ENCODE measurements at regions of chr12 and their contacts with region 1.

Region 1: DNA sequence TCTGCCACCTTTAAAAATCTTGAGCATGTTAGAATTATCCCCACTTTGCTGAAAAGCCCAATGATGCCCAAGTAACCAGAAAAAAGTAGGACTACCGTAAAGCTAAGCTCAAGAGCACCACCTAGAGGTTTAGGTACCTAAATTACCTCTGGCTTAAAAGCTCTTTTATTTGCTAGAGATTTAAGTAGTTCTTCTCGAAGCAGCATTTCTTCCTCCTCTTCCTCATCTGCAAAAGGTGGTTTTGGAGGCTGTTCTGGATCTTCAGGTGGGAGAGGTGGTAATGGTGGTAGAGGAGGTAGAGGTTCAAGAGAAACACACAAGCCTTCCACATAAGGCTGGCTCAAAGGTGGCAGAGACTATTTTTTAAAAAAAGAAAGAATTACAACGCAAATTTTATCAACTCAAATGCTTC is 26.9 kb downstream of the ZFC3H1 start:
- DNase-seq: peak; percentile 66
- H3K4me3 ChIP-seq: no peak overlapping the region
- H3K27ac ChIP-seq: no peak overlapping the region
- H3K4me1 ChIP-seq: no peaks in the 10 kb centered on the region
- H3K27me3 ChIP-seq: no peaks in the 10 kb centered on the region
- CTCF ChIP-seq: peak; percentile 53 to 66
- POLR2A ChIP-seq: no peak

Region 2: DNA sequence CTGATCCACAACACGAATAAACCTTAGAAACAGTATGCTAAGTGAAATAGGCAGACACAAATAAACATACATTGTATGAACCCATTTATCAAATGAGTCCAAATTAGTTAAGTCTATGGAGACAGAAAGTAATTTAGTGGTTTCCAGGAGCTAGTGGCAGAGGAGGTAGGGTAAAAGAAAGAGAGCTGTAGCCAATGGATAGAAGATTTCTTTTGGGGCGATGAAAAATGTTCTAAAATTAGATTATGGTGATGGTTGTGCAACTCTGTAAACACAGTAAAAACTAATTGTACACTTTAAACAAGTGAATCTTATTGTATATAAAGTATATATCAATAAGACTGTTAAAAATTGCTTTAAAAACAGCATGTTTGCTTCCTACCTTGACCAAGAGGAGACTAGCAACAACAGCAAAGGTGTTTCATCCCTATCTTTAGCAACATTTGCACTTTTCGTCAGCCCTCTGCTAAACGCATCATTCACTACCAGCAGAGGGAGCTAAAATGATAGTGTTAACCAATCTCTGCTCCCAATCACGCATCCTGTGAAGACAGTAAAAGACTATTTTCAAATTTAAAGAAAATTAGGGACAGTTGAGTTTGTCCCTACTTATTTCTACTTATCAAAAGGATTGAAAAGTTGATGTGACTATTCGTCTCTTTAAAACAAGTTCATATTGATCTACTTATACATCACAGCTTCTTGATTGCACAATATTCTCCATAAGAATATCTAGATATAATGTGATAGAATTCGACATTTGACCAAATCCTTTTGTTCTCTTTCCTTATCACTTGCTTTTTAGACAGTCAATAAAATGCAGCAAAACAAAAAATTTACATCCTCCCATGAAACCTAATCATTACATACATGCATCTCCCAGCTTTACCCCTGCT is 221.1 kb before region 1 on chr12:
- CTCF ChIA-PET with region 1: interaction called, 14 read pairs
- POLR2A ChIA-PET with region 1: no interaction called
- dilution Hi-C with region 1: no loop called
- intact Hi-C with region 1: loop called (anchors 1 kb)
- DNase-seq: peak; percentile 49
- H3K4me3 ChIP-seq: no peak overlapping the region
- H3K27ac ChIP-seq: no peak overlapping the region
- H3K4me1 ChIP-seq: no peaks in the 10 kb centered on the region
- H3K27me3 ChIP-seq: no peaks in the 10 kb centered on the region
- CTCF ChIP-seq: peak; percentile 55 to 67
- POLR2A ChIP-seq: no peak

Region 3: DNA sequence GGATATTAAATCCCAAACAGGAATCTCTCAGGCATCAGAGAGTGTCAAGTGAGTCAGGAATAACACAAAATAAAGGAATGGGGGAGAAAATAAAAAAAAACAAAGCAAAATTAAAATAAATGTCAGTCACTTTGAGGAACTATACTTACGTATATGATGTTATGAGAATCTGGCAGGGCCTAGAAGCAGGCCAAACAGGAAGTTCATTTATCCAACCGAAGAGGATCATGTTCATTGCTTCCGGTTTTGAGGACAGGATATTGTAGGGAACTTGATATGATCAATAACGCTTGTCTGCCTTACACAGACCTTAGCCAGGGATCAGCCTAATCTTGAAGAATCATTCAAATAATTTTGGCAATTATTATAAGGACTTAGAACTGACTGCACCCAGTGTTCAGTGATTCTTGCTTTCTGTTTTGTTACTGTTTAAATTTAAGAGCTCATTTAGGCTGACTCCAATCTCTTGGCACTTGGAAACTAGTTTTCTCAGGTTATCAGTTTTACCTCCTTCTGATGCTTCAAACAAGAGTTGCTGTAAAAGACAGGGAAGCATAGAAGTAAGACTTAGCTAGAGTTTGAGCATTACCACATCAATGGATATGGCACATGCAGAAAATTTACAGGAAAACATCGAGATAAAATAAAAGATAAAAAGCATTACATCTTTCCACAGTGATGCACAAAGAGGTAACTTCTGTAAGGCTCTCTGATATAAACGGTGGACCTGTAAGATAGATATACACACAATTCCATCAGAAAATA is 26.5 kb before region 1 on chr12:
- CTCF ChIA-PET with region 1: interaction called, 21 read pairs
- POLR2A ChIA-PET with region 1: no interaction called
- dilution Hi-C with region 1: no loop called
- intact Hi-C with region 1: no loop called
- DNase-seq: no peak
- H3K4me3 ChIP-seq: no peak overlapping the region
- H3K27ac ChIP-seq: no peak overlapping the region
- H3K4me1 ChIP-seq: no peaks in the 10 kb centered on the region
- H3K27me3 ChIP-seq: no peaks in the 10 kb centered on the region
- CTCF ChIP-seq: no peak
- POLR2A ChIP-seq: no peak

Region 4: GRCh38 chr12:71626098-71626497 is 10.6 kb before region 1 on chr12:
- CTCF ChIA-PET with region 1: interaction called, 67 read pairs
- POLR2A ChIA-PET with region 1: interaction called, 4 read pairs
- dilution Hi-C with region 1: no loop called
- intact Hi-C with region 1: no loop called
- DNase-seq: peak; percentile 61
- H3K4me3 ChIP-seq: no peak overlapping the region
- H3K27ac ChIP-seq: peak overlapping the region; percentile 64
- H3K4me1 ChIP-seq: peaks cover 19% of the 10 kb centered on the region
- H3K27me3 ChIP-seq: no peaks in the 10 kb centered on the region
- CTCF ChIP-seq: no peak
- POLR2A ChIP-seq: no peak

Region 5: GRCh38 chr12:71652656-71653055 is 15.9 kb after region 1 on chr12:
- CTCF ChIA-PET with region 1: interaction called, 42 read pairs
- POLR2A ChIA-PET with region 1: no interaction called
- dilution Hi-C with region 1: no loop called
- intact Hi-C with region 1: no loop called
- DNase-seq: no peak
- H3K4me3 ChIP-seq: no peak overlapping the region
- H3K27ac ChIP-seq: no peak overlapping the region
- H3K4me1 ChIP-seq: peaks cover 5% of the 10 kb centered on the region
- H3K27me3 ChIP-seq: no peaks in the 10 kb centered on the region
- CTCF ChIP-seq: no peak
- POLR2A ChIP-seq: no peak

Region 6: GRCh38 chr12:71663561-71664294 is 27.0 kb after region 1 on chr12 and contains the start of gene ZFC3H1:
- CTCF ChIA-PET with region 1: interaction called, 33 read pairs
- POLR2A ChIA-PET with region 1: interaction called, 3 read pairs
- dilution Hi-C with region 1: no loop called
- intact Hi-C with region 1: loop called (anchors 2 kb)
- DNase-seq: peak; percentile 99
- H3K4me3 ChIP-seq: peak within 1 kb of the TSS; percentile 81 to 98 (median 92)
- H3K27ac ChIP-seq: peak within 1 kb of the TSS; percentile 56
- H3K4me1 ChIP-seq: peaks cover 17% of the 10 kb centered on the region
- H3K27me3 ChIP-seq: no peaks in the 10 kb centered on the region
- CTCF ChIP-seq: peak in 1 of 2 donors; percentile 31
- POLR2A ChIP-seq: peak; percentile 73
- total RNA-seq, gene ZFC3H1: 47.6 and 60.4 TPM in 2 replicates

Region 7: DNA sequence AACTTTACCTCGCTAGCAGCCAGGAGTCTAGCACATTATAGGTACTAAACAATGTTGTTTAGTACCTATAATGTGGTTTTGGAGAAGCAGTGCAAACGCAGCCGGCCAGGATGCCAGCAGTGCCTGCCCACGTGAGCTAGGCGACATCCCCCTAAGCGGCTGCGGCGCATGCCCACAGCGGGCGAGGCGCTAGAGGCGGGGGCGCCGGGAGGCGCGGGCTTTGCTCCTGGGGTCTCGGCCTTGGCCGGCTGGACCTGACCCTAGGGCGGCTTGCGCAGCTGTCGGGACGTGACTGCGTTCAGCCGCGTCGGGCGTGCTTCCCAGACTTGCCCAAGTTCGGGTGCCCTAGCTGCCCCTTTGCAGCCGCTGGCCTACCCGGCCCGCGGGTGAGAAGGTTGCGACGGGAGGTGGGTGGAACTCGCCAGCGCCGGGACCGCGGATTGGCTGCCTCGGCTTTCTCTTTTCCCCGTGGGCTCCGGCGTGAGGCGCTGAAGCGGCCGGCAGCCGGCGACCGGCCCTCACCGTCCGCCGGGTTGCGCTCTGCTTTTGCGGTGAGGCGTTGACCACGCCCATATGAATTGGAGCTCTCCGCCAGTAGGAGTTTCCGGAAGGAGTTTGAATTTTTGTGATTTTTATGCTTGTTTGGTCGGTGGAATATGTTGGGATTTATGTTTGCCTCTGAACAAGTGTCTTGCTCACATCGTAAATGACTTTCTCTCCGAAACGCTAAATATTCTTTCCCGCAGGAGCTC is 49.4 kb after region 1 on chr12 and contains the start of gene TMEM19:
- CTCF ChIA-PET with region 1: interaction called, 17 read pairs
- POLR2A ChIA-PET with region 1: no interaction called
- dilution Hi-C with region 1: no loop called
- intact Hi-C with region 1: no loop called
- DNase-seq: peak; percentile 93
- H3K4me3 ChIP-seq: peak within 1 kb of the TSS; percentile 76 to 98 (median 91)
- H3K27ac ChIP-seq: peak within 1 kb of the TSS; percentile 32
- H3K4me1 ChIP-seq: peaks cover 4% of the 10 kb centered on the region
- H3K27me3 ChIP-seq: no peaks in the 10 kb centered on the region
- CTCF ChIP-seq: peak in 1 of 2 donors; percentile 26
- POLR2A ChIP-seq: peak; percentile 86
- total RNA-seq, gene TMEM19: 23.8 and 24.4 TPM in 2 replicates